Naive thymus-derived CD4-positive, alpha-beta T cell (primary cell): ENCODE measurements at regions of chr14 and their contacts with region 1.

Region 1: DNA sequence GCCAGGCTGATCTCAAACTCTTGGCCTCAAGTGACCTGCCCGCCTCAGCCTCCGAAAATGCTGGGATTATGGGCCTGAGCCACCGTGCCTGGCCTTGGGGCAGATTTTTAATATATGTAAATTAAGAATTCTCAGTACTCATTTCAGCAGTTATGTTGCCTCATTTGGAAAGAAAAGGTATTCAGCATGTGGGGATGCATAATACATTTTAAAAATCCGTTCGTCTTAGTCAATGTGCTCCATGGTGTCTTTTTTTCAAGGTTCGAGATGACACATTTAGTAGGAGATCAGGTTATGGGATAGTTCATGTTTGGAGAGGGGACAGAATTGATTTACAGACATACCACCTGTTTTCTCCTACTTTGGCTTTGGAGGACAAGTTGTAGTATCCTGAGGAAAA is 10.2 kb downstream of the SYNE2 start:
- DNase-seq: no peak
- ATAC-seq: no peak
- H3K4me3 ChIP-seq: no peak overlapping the region
- H3K4me3 Mint-ChIP-seq: peak overlapping the region in 5 of 10 donors; percentile 43 to 75 (median 58)
- H3K27ac ChIP-seq: peak overlapping the region; percentile 84
- H3K27ac Mint-ChIP-seq: peak overlapping the region; percentile 75 to 100 (median 90)
- H3K4me1 ChIP-seq: peaks cover 35 to 75% of the 10 kb centered on the region in 2 donors
- H3K4me1 Mint-ChIP-seq: peaks cover 26 to 77% (median 58%) of the 10 kb centered on the region in 7 donors
- H3K27me3 ChIP-seq: no peaks in the 10 kb centered on the region
- H3K27me3 Mint-ChIP-seq: peaks cover 0 to 2% (median 0%) of the 10 kb centered on the region in 5 donors

Region 2: DNA sequence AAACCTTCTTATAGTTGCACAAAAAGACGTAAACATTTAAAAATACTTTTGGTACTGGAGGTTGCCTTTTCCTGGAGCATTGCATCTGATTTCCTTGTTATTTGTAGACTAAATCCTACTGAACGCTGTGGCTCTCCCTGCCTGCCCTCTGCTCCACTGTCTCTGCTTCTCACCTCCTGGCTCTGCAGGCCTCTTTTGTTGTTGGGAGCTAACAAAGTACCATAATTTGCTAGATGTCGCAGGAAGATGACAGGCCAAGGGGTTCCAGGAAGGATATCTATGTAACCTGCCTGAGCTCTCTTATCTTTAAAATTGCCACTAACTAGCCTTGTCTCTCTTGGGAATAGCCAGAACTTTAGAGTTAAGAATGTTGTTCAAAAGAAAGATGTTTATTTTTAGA is 11.2 kb after region 1 on chr14:
- CTCF ChIA-PET with region 1: interaction called, 6 read pairs
- POLR2A ChIA-PET with region 1: interaction called, 10 read pairs
- intact Hi-C with region 1: no loop called
- DNase-seq: no peak
- ATAC-seq: no peak
- H3K4me3 ChIP-seq: no peak overlapping the region
- H3K4me3 Mint-ChIP-seq: peak overlapping the region in 1 of 10 donors; percentile 27
- H3K27ac ChIP-seq: no peak overlapping the region
- H3K27ac Mint-ChIP-seq: peak overlapping the region in 5 of 9 donors; percentile 27 to 57 (median 34)
- H3K4me1 ChIP-seq: peaks cover 11 to 21% of the 10 kb centered on the region in 2 donors
- H3K4me1 Mint-ChIP-seq: peaks cover 24 to 66% (median 42%) of the 10 kb centered on the region in 7 donors
- H3K27me3 ChIP-seq: no peaks in the 10 kb centered on the region
- H3K27me3 Mint-ChIP-seq: no peaks in the 10 kb centered on the region

Region 3: GRCh38 chr14:63908667-63909264 is 45.8 kb after region 1 on chr14:
- CTCF ChIA-PET with region 1: no interaction called
- POLR2A ChIA-PET with region 1: interaction called, 4 read pairs
- intact Hi-C with region 1: loop called in 1 of 2 experiments (anchors 5 kb)
- DNase-seq: no peak
- ATAC-seq: no peak
- H3K4me3 ChIP-seq: no peak overlapping the region
- H3K4me3 Mint-ChIP-seq: peak overlapping the region in 9 of 10 donors; percentile 40 to 79 (median 71)
- H3K27ac ChIP-seq: no peak overlapping the region
- H3K27ac Mint-ChIP-seq: peak overlapping the region in 6 of 9 donors; percentile 4 to 79 (median 54)
- H3K4me1 ChIP-seq: peaks cover 0 to 14% of the 10 kb centered on the region in 2 donors
- H3K4me1 Mint-ChIP-seq: peaks cover 25 to 65% (median 48%) of the 10 kb centered on the region in 7 donors
- H3K27me3 ChIP-seq: no peaks in the 10 kb centered on the region
- H3K27me3 Mint-ChIP-seq: peaks cover 0 to 5% (median 0%) of the 10 kb centered on the region in 5 donors

Region 4: GRCh38 chr14:65251213-65251612 is 1388.2 kb after region 1 on chr14:
- CTCF ChIA-PET with region 1: no interaction called
- POLR2A ChIA-PET with region 1: no interaction called
- intact Hi-C with region 1: no loop called
- DNase-seq: no peak
- ATAC-seq: peak; percentile 44
- H3K4me3 ChIP-seq: no peak overlapping the region
- H3K4me3 Mint-ChIP-seq: no peak overlapping the region
- H3K27ac ChIP-seq: no peak overlapping the region
- H3K27ac Mint-ChIP-seq: no peak overlapping the region
- H3K4me1 ChIP-seq: peaks cover 0 to 3% of the 10 kb centered on the region in 2 donors
- H3K4me1 Mint-ChIP-seq: peaks cover 10 to 26% (median 19%) of the 10 kb centered on the region in 7 donors
- H3K27me3 ChIP-seq: no peaks in the 10 kb centered on the region
- H3K27me3 Mint-ChIP-seq: no peaks in the 10 kb centered on the region